H1 (cell line): ENCODE measurements at regions of chr11 and their contacts with region 1.

Region 1: GRCh38 chr11:61645179-61645868 is 34.9 kb upstream of the DAGLA start:
- DNase-seq: no peak
- H3K4me3 ChIP-seq: no peak overlapping the region
- H3K27ac ChIP-seq: no peak overlapping the region
- H3K4me1 ChIP-seq: peaks cover 0 to 3% (median 0%) of the 10 kb centered on the region in 4 experiments; a peak in 1 of 7 replicates
- H3K27me3 ChIP-seq: no peaks in the 10 kb centered on the region
- CTCF ChIP-seq: no peak
- EP300 ChIP-seq: no peak
- POLR2A ChIP-seq: no peak
- RAD21 ChIP-seq: no peak

Region 2: GRCh38 chr11:61294717-61295595 is 350.4 kb before region 1 on chr11 and contains the start of gene VWCE:
- CTCF ChIA-PET with region 1: no interaction called
- POLR2A ChIA-PET with region 1: no interaction called
- DNase-seq: peak; percentile 53 to 86
- H3K4me3 ChIP-seq: peak within 1 kb of the TSS; percentile 54 to 82 (median 78)
- H3K27ac ChIP-seq: peak within 1 kb of the TSS; percentile 57
- H3K4me1 ChIP-seq: peaks cover 2 to 9% (median 8%) of the 10 kb centered on the region in 4 experiments
- H3K27me3 ChIP-seq: peaks cover 1 to 12% (median 7%) of the 10 kb centered on the region in 4 experiments; a peak in 6 of 7 replicates
- CTCF ChIP-seq: 0 out of 4 replicates have a peak, but pooled peaks of 1 of the 3 experiments have one; percentile 10
- EP300 ChIP-seq: no peak
- POLR2A ChIP-seq: peak in 1 of 2 experiments; percentile 26; a peak in 2 of 3 replicates
- RAD21 ChIP-seq: no peak; a peak in 1 of 4 replicates
- total RNA-seq, gene VWCE: 12.3 and 14.5 TPM in 2 replicates

Region 3: GRCh38 chr11:61659414-61660209 is 14.3 kb after region 1 on chr11:
- CTCF ChIA-PET with region 1: interaction called, 22 read pairs
- POLR2A ChIA-PET with region 1: no interaction called
- DNase-seq: no peak
- H3K4me3 ChIP-seq: no peak overlapping the region
- H3K27ac ChIP-seq: no peak overlapping the region
- H3K4me1 ChIP-seq: peaks cover 4 to 10% (median 7%) of the 10 kb centered on the region in 4 experiments
- H3K27me3 ChIP-seq: no peaks in the 10 kb centered on the region
- CTCF ChIP-seq: peak in 2 of 3 experiments; percentile 33; a peak in 3 of 4 replicates
- EP300 ChIP-seq: no peak
- POLR2A ChIP-seq: no peak
- RAD21 ChIP-seq: peak in 1 of 2 experiments; percentile 31; a peak in 1 of 4 replicates

Region 4: DNA sequence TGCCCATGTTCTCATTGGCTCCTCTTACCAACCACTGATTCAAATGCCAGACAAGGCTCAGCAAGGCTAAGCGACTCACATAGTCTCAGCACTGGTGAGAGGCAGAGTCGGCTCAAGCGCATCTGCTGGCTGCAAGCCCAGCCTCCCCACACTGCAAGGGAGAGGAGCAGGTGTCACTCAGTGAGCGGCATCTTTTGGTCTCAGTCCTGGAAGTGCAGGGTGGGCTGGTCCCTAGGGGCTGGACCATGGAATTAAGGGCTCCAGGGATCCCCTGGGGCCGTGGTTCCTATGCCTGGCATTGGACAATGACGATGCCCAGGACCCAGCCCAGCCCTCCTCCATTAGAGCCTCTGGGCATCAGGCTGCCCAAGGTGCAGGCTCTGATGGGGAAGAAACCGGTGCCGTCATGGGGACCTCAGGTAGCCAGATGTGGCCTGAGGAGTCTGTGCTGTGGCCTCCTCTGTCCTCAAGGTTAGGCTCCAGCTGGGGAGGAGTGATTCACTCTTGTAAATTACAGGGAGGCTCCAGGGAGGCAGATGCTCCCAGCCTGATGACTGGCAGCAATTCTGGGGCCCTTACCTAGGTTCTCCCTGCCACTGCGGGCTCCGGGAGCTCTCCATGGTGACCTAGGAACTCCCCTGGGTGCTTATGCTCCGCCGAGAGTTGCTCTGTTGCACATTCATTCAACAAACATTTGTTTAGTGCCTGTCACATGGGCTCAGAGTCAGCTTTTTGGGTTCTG is 210.8 kb after region 1 on chr11:
- CTCF ChIA-PET with region 1: no interaction called
- POLR2A ChIA-PET with region 1: no interaction called
- DNase-seq: no peak
- H3K4me3 ChIP-seq: no peak overlapping the region
- H3K27ac ChIP-seq: no peak overlapping the region
- H3K4me1 ChIP-seq: no peaks in the 10 kb centered on the region
- H3K27me3 ChIP-seq: no peaks in the 10 kb centered on the region
- CTCF ChIP-seq: no peak
- EP300 ChIP-seq: no peak
- POLR2A ChIP-seq: no peak
- RAD21 ChIP-seq: no peak